CD4-positive, alpha-beta memory T cell (primary cell): ENCODE measurements at regions of chr12 and their contacts with region 1.

Region 1: GRCh38 chr12:89709157-89709994 is 738 bp upstream of the ATP2B1 start:
- DNase-seq: peak; percentile 97 to 99 (median 99)
- H3K4me3 ChIP-seq: peak overlapping the region; percentile 81 to 89
- H3K4me3 Mint-ChIP-seq: peak overlapping the region; percentile 90 to 96 (median 93)
- H3K27ac ChIP-seq: peak overlapping the region; percentile 95
- H3K27ac Mint-ChIP-seq: peak overlapping the region; percentile 96 to 99 (median 98)
- H3K4me1 ChIP-seq: peaks cover 41% of the 10 kb centered on the region
- H3K4me1 Mint-ChIP-seq: peaks cover 24 to 54% (median 34%) of the 10 kb centered on the region in 4 donors
- H3K27me3 ChIP-seq: no peaks in the 10 kb centered on the region
- H3K27me3 Mint-ChIP-seq: peaks cover 0 to 2% of the 10 kb centered on the region in 2 donors

Region 2: GRCh38 chr12:89352492-89353187 is 356.7 kb before region 1 on chr12 and contains the start of gene DUSP6:
- CTCF ChIA-PET with region 1: no interaction called
- POLR2A ChIA-PET with region 1: interaction called, 9 read pairs
- intact Hi-C with region 1: loop called (anchors 1 kb)
- DNase-seq: peak; percentile 86 to 95 (median 90)
- H3K4me3 ChIP-seq: peak within 1 kb of the TSS; percentile 70 to 83
- H3K4me3 Mint-ChIP-seq: peak within 1 kb of the TSS; percentile 87 to 98 (median 92)
- H3K27ac ChIP-seq: peak within 1 kb of the TSS; percentile 68
- H3K27ac Mint-ChIP-seq: peak within 1 kb of the TSS; percentile 86 to 95 (median 92)
- H3K4me1 ChIP-seq: peaks cover 48% of the 10 kb centered on the region
- H3K4me1 Mint-ChIP-seq: peaks cover 27 to 56% (median 40%) of the 10 kb centered on the region in 4 donors
- H3K27me3 ChIP-seq: no peaks in the 10 kb centered on the region
- H3K27me3 Mint-ChIP-seq: no peaks in the 10 kb centered on the region
- total RNA-seq, gene DUSP6: 0.90 to 1.9 TPM

Region 3: DNA sequence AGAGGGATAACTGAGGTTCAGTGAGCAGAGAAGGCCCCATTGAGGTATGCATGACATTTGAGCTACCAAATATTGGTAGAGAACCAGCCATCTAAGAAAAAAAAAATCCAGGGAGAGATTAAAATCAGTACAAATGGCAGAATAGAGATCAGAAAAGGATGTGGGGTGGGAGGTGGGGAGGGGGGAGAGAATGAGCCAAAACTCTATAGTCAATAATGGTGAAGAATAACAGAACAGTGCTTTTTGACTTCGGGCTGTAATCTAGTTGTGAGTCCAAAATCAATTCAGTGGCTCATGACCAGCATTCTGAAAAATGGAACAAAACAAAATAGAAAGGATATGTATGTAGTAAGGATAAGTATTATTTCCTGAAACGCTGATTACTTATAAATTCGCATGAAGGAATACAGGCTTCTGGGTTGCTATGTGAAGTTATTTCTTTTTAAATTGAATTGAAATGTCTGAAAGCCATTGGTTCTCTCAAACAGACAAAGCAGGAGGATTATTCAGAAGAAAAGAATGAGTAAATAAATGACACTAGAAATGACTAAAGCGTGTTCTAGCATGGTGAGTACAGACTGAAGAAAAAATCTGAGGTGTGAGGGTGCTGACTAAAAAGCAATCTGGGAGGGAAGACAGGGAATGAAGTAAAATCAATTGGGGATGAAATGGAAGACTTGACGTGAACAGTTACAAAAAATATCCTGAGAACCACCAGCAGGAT is 73.2 kb before region 1 on chr12:
- CTCF ChIA-PET with region 1: no interaction called
- POLR2A ChIA-PET with region 1: interaction called, 11 read pairs
- intact Hi-C with region 1: no loop called
- DNase-seq: no peak
- H3K4me3 ChIP-seq: no peak overlapping the region
- H3K4me3 Mint-ChIP-seq: no peak overlapping the region
- H3K27ac ChIP-seq: no peak overlapping the region
- H3K27ac Mint-ChIP-seq: peak overlapping the region in 6 of 7 donors; percentile 5 to 66 (median 23)
- H3K4me1 ChIP-seq: no peaks in the 10 kb centered on the region
- H3K4me1 Mint-ChIP-seq: peaks cover 13 to 43% (median 37%) of the 10 kb centered on the region in 4 donors
- H3K27me3 ChIP-seq: no peaks in the 10 kb centered on the region
- H3K27me3 Mint-ChIP-seq: no peaks in the 10 kb centered on the region

Region 4: GRCh38 chr12:89678225-89678624 is 31.2 kb before region 1 on chr12:
- CTCF ChIA-PET with region 1: interaction called, 3 read pairs
- POLR2A ChIA-PET with region 1: interaction called, 11 read pairs
- intact Hi-C with region 1: no loop called
- DNase-seq: no peak
- H3K4me3 ChIP-seq: no peak overlapping the region
- H3K4me3 Mint-ChIP-seq: peak overlapping the region in 6 of 8 donors; percentile 3 to 49 (median 22)
- H3K27ac ChIP-seq: no peak overlapping the region
- H3K27ac Mint-ChIP-seq: peak overlapping the region in 5 of 7 donors; percentile 1 to 50 (median 13)
- H3K4me1 ChIP-seq: peaks cover 67% of the 10 kb centered on the region
- H3K4me1 Mint-ChIP-seq: peaks cover 52 to 81% (median 68%) of the 10 kb centered on the region in 4 donors
- H3K27me3 ChIP-seq: no peaks in the 10 kb centered on the region
- H3K27me3 Mint-ChIP-seq: no peaks in the 10 kb centered on the region

Region 5: GRCh38 chr12:89762498-89763188 is 53.3 kb after region 1 on chr12:
- CTCF ChIA-PET with region 1: interaction called, 11 read pairs
- POLR2A ChIA-PET with region 1: interaction called, 83 read pairs
- intact Hi-C with region 1: no loop called
- DNase-seq: no peak
- H3K4me3 ChIP-seq: no peak overlapping the region
- H3K4me3 Mint-ChIP-seq: peak overlapping the region in 1 of 8 donors; percentile 15
- H3K27ac ChIP-seq: no peak overlapping the region
- H3K27ac Mint-ChIP-seq: peak overlapping the region in 3 of 7 donors; percentile 9 to 75 (median 29)
- H3K4me1 ChIP-seq: peaks cover 50% of the 10 kb centered on the region
- H3K4me1 Mint-ChIP-seq: peaks cover 43 to 90% (median 59%) of the 10 kb centered on the region in 4 donors
- H3K27me3 ChIP-seq: no peaks in the 10 kb centered on the region
- H3K27me3 Mint-ChIP-seq: no peaks in the 10 kb centered on the region

Region 6: DNA sequence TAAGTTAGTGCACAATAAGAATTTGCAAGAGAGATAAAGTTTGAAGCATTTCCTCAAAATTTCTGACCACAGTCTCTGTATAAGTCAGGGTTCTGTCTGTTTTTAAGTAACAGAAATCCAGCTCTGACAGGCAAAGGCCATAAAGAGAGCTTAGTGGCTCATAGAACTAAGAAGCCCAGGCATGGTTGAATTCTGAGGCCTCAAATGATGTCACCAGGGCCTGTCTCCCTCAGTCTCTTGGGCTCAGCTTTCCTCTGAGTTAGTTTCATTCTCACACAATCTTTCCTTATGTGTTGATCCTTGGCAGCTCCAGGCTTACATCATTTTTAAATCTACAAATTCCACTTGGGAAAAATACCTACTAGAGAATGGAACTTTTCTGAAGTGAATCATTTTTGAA is 172.7 kb after region 1 on chr12:
- CTCF ChIA-PET with region 1: no interaction called
- POLR2A ChIA-PET with region 1: interaction called, 53 read pairs
- intact Hi-C with region 1: loop called (anchors 1 kb)
- DNase-seq: peak in 1 of 5 donors; percentile 53
- H3K4me3 ChIP-seq: no peak overlapping the region
- H3K4me3 Mint-ChIP-seq: peak overlapping the region in 6 of 8 donors; percentile 18 to 79 (median 58)
- H3K27ac ChIP-seq: peak overlapping the region; percentile 62
- H3K27ac Mint-ChIP-seq: peak overlapping the region; percentile 91 to 98 (median 96)
- H3K4me1 ChIP-seq: peaks cover 65% of the 10 kb centered on the region
- H3K4me1 Mint-ChIP-seq: peaks cover 42 to 67% (median 54%) of the 10 kb centered on the region in 4 donors
- H3K27me3 ChIP-seq: no peaks in the 10 kb centered on the region
- H3K27me3 Mint-ChIP-seq: no peaks in the 10 kb centered on the region

Region 7: GRCh38 chr12:90013409-90013808 is 304.0 kb after region 1 on chr12:
- CTCF ChIA-PET with region 1: interaction called, 5 read pairs
- POLR2A ChIA-PET with region 1: interaction called, 5 read pairs
- intact Hi-C with region 1: loop called (anchors 2 kb)
- DNase-seq: peak in 4 of 5 donors; percentile 21 to 32 (median 29)
- H3K4me3 ChIP-seq: no peak overlapping the region
- H3K4me3 Mint-ChIP-seq: no peak overlapping the region
- H3K27ac ChIP-seq: no peak overlapping the region
- H3K27ac Mint-ChIP-seq: peak overlapping the region in 2 of 7 donors; percentile 31 to 65
- H3K4me1 ChIP-seq: peaks cover 3% of the 10 kb centered on the region
- H3K4me1 Mint-ChIP-seq: peaks cover 8 to 11% (median 10%) of the 10 kb centered on the region in 4 donors
- H3K27me3 ChIP-seq: no peaks in the 10 kb centered on the region
- H3K27me3 Mint-ChIP-seq: no peaks in the 10 kb centered on the region